ENCODE measurements at regions of chr15 and their contacts with region 1.

Region 1: GRCh38 chr15:81106560-81106959 is 27.5 kb upstream of the CFAP161 start:
- DNase-seq: peak; percentile 54
- H3K4me3 ChIP-seq: no peak overlapping the region
- H3K27ac ChIP-seq: no peak overlapping the region
- H3K4me1 ChIP-seq: no peaks in the 10 kb centered on the region
- CTCF ChIP-seq: peak; percentile 85

Region 2: GRCh38 chr15:80977627-80978036 is 128.9 kb before region 1 on chr15:
- CTCF ChIA-PET with region 1: no interaction called
- POLR2A ChIA-PET with region 1: interaction called, 3 read pairs
- intact Hi-C with region 1: loop called (anchors 1 kb)
- DNase-seq: peak; percentile 72
- H3K4me3 ChIP-seq: no peak overlapping the region
- H3K27ac ChIP-seq: no peak overlapping the region
- H3K4me1 ChIP-seq: peaks cover 29% of the 10 kb centered on the region
- CTCF ChIP-seq: peak; percentile 89

Region 3: GRCh38 chr15:81274931-81275707 is 168.6 kb after region 1 on chr15:
- CTCF ChIA-PET with region 1: no interaction called
- POLR2A ChIA-PET with region 1: no interaction called
- intact Hi-C with region 1: no loop called
- DNase-seq: peak; percentile 89
- H3K4me3 ChIP-seq: no peak overlapping the region
- H3K27ac ChIP-seq: no peak overlapping the region
- H3K4me1 ChIP-seq: peaks cover 10% of the 10 kb centered on the region
- CTCF ChIP-seq: peak; percentile 84

Measured in OCI-LY7 (cell line).